Activated CD4-positive, alpha-beta T cell treated with anti-CD3 and anti-CD28 coated beads, Interleukin-2, amount 10 ng/mL, durations not matched to agents 7 days and 5 days (primary cell): ENCODE measurements at regions of chr1 and their contacts with region 1.

Region 1: DNA sequence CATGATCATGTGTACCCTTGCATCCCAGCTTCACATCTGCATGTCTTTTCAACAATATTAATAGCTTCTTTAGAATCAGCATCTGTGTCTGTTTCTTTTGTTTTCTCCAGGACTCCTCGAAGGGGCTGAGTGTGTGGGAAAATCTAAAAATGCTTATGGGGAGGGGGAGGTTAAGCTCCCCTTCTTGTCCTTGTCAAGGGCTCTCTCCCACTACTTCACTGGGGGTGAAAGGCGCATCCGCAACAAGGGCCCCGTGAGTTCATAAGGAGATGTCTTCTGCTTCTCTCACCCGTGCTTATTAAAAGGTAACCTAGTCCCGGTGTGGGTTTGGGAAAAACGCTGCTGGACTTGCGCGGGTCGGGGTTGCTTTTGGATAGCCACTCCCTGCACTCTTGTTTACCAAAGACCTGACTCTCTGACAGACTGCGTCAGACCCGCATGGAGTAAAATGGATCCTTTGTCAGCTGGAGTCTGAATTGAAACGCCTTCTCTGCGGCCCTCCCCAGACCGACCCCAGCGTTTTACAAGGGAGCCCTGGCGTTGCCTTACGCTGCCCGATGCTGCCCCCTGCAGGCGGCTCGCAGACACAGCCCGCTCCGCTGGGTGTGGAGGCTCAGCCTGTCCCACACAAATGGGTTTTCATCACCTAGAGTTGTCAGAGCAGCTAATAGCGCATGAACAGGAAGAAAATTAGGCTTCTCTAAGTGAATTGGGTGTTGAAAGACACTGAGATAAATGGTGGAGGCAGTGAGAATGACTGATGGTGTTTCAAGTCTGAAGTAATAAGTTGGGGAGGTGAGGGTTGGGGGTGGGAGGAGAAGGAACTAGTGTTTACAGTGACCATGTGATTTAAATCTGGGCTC is 53.8 kb downstream of the IER5 start:
- DNase-seq: peak; percentile 88
- H3K4me3 Mint-ChIP-seq: peak overlapping the region; percentile 14
- H3K27ac Mint-ChIP-seq: peak overlapping the region; percentile 56
- H3K4me1 Mint-ChIP-seq: peaks cover 60% of the 10 kb centered on the region
- H3K27me3 Mint-ChIP-seq: peaks cover 30% of the 10 kb centered on the region

Region 2: DNA sequence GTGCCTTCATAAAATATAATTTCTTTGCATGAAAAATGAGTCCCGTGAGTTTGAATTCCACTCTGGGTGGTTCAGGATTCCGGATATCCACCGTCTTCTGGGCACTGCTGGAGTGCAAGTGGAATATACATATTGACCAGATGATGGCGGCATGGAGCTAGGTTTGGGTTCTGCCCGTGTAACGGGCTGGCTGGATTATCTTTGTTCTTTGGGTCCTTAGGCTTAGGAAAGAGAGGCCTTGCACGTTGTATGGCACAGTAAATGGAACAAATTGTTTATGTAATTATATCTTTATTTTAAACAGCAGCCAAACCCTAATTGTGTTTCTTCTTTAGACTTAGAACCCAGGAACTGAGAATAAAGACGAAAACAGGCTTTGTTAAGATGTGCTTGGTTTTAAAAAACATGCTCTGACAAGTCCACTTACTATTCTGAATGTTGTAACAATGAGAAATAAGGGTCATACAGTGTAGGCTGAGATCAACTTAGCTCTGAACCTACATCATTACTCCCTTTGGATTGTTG is 626.4 kb before region 1 on chr1:
- CTCF ChIA-PET with region 1: interaction called, 10 read pairs
- POLR2A ChIA-PET with region 1: no interaction called
- DNase-seq: peak; percentile 73
- H3K4me3 Mint-ChIP-seq: no peak overlapping the region
- H3K27ac Mint-ChIP-seq: no peak overlapping the region
- H3K4me1 Mint-ChIP-seq: peaks cover 3% of the 10 kb centered on the region
- H3K27me3 Mint-ChIP-seq: peaks cover 10% of the 10 kb centered on the region

Region 3: GRCh38 chr1:181033799-181034451 is 108.4 kb before region 1 on chr1 and contains the start of gene MR1:
- CTCF ChIA-PET with region 1: interaction called, 57 read pairs
- POLR2A ChIA-PET with region 1: interaction called, 3 read pairs
- DNase-seq: peak; percentile 67
- H3K4me3 Mint-ChIP-seq: peak within 1 kb of the TSS; percentile 92
- H3K27ac Mint-ChIP-seq: peak within 1 kb of the TSS; percentile 98
- H3K4me1 Mint-ChIP-seq: peaks cover 55% of the 10 kb centered on the region
- H3K27me3 Mint-ChIP-seq: no peaks in the 10 kb centered on the region
- total RNA-seq, gene MR1: 37.4 to 38.7 TPM

Region 4: GRCh38 chr1:181079382-181079781 is 62.9 kb before region 1 on chr1:
- CTCF ChIA-PET with region 1: interaction called, 31 read pairs
- POLR2A ChIA-PET with region 1: no interaction called
- DNase-seq: no peak
- H3K4me3 Mint-ChIP-seq: no peak overlapping the region
- H3K27ac Mint-ChIP-seq: no peak overlapping the region
- H3K4me1 Mint-ChIP-seq: peaks cover 20% of the 10 kb centered on the region
- H3K27me3 Mint-ChIP-seq: peaks cover 22% of the 10 kb centered on the region

Region 5: DNA sequence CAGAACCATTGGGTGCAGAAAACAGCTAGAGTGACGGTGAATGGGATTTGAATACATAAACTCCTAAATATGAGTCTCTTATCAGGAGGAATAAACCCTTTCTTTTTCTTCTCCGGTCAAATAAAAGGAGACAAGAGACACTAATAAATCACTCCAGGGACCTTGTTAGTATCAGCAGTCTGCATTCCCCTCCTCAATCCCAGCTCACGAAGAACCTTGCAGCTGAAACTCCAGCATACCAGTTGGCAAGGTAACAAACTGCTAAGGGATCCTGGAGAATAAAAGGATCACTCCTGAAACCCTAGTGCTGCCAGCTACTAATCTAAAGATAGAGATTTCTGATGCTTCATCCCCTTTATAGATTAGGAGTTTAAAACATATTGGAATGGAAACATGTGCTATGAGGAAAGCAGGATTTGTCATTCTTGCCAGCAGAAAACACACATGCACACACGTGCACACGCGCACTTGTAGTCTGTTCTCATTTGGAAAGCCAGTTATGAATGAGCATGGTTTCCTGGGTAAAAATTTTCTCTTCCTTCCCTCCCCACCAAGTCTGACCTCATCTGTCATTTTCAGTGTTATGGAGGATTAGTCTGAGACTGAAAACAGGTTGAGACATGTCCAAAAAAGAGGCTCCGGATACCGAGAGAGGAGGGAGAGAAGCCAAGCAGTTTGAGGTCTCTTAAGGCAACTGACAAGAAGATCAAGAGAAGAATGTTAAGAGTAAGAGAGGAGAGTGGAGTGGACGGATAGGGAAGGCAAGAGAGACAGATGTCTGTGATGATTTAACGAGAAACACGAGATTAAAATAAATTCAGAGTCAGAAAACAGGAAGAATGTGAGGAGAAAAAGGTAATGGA is 42.9 kb before region 1 on chr1:
- CTCF ChIA-PET with region 1: interaction called, 45 read pairs
- POLR2A ChIA-PET with region 1: no interaction called
- DNase-seq: peak; percentile 46
- H3K4me3 Mint-ChIP-seq: peak overlapping the region; percentile 11
- H3K27ac Mint-ChIP-seq: peak overlapping the region; percentile 83
- H3K4me1 Mint-ChIP-seq: peaks cover 83% of the 10 kb centered on the region
- H3K27me3 Mint-ChIP-seq: no peaks in the 10 kb centered on the region

Region 6: GRCh38 chr1:181117638-181118449 is 24.5 kb before region 1 on chr1:
- CTCF ChIA-PET with region 1: interaction called, 26 read pairs
- POLR2A ChIA-PET with region 1: no interaction called
- DNase-seq: no peak
- H3K4me3 Mint-ChIP-seq: no peak overlapping the region
- H3K27ac Mint-ChIP-seq: no peak overlapping the region
- H3K4me1 Mint-ChIP-seq: peaks cover 4% of the 10 kb centered on the region
- H3K27me3 Mint-ChIP-seq: peaks cover 2% of the 10 kb centered on the region

Region 7: GRCh38 chr1:181152892-181153633 is 10.7 kb after region 1 on chr1:
- CTCF ChIA-PET with region 1: interaction called, 26 read pairs
- POLR2A ChIA-PET with region 1: interaction called, 3 read pairs
- DNase-seq: no peak
- H3K4me3 Mint-ChIP-seq: no peak overlapping the region
- H3K27ac Mint-ChIP-seq: no peak overlapping the region
- H3K4me1 Mint-ChIP-seq: peaks cover 47% of the 10 kb centered on the region
- H3K27me3 Mint-ChIP-seq: peaks cover 25% of the 10 kb centered on the region

Region 8: GRCh38 chr1:181255270-181255929 is 113.1 kb after region 1 on chr1:
- CTCF ChIA-PET with region 1: no interaction called
- POLR2A ChIA-PET with region 1: no interaction called
- DNase-seq: no peak
- H3K4me3 Mint-ChIP-seq: no peak overlapping the region
- H3K27ac Mint-ChIP-seq: no peak overlapping the region
- H3K4me1 Mint-ChIP-seq: no peaks in the 10 kb centered on the region
- H3K27me3 Mint-ChIP-seq: peaks cover 8% of the 10 kb centered on the region